ENCODE measurements at regions of chr1 and their contacts with region 1.

Region 1: GRCh38 chr1:172951730-172952365 is 98.9 kb downstream of the TNFSF18 start:
- DNase-seq: peak; percentile 24
- H3K4me3 Mint-ChIP-seq: no peak overlapping the region
- H3K27ac Mint-ChIP-seq: no peak overlapping the region
- H3K4me1 Mint-ChIP-seq: peaks cover 28% of the 10 kb centered on the region
- H3K27me3 Mint-ChIP-seq: no peaks in the 10 kb centered on the region
- CTCF ChIP-seq: no peak

Region 2: DNA sequence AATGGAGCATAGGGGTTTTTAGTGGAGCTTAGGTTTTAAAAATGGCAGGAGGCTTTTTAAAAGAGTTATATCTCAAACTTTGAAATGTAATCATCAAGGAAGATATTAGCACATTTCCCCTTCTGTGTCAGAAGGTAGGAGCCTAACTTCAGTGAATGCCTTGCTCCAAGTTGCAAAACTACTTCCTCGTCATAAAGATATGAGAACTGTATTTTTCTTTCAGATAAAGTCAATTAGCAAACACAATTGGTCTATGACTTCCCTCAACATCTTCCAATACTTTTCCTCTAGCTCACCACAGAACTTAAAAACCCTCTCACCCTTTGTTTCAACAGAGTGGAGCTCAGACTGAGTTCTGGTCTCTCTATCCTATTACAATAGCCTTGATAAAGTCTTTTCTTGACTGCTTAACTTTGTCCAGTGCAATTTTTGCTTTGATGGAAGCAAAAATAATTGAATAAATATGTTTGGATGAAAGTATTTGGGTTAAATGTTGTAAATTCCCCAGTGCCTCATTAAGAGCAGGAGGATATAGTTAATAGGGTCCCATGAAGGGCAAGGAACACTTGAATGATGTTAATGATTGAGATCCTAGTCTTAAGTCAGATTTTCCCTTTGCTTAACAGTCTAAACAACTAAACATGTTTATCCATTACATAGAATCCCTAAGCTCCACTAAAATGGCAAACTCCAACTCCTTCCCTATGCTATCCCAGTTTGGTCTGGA is 40.0 kb after region 1 on chr1:
- CTCF ChIA-PET with region 1: interaction called, 15 read pairs
- intact Hi-C with region 1: no loop called
- DNase-seq: no peak
- H3K4me3 Mint-ChIP-seq: no peak overlapping the region
- H3K27ac Mint-ChIP-seq: no peak overlapping the region
- H3K4me1 Mint-ChIP-seq: peaks cover 10% of the 10 kb centered on the region
- H3K27me3 Mint-ChIP-seq: no peaks in the 10 kb centered on the region
- CTCF ChIP-seq: no peak

Measured in Calu3 (cell line).